ENCODE measurements at regions of chr11 and their contacts with region 1.

Region 1: DNA sequence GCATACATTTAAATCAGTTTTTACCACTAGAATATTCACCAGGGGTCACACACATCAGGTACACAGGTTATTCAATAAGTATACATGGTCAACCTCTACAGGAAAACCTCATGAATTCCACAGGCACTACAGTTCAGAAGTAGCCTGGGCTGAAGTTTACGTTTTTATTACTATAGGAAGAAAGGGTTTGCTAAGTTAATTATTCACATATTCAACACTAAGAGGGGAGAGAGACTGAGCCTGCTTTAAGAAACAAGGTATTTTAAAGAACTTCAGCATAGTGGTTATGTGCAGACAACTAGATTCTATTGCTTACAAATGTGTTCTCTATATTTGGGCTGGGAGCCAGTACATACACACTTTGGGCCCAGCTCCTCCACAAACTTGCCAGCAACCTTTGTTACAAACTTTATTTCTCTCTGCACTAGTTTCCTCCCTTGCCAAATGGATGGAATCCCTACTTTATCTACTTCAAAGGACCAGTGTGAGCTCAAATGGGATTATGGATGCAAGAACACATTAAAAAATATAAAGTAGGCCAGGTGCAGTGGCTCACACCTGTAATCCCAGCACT is 31.9 kb downstream of the IL18BP start:
- DNase-seq: no peak
- H3K4me3 Mint-ChIP-seq: no peak overlapping the region
- H3K27ac Mint-ChIP-seq: peak overlapping the region; percentile 13
- H3K4me1 Mint-ChIP-seq: peaks cover 42% of the 10 kb centered on the region
- H3K27me3 Mint-ChIP-seq: no peaks in the 10 kb centered on the region

Region 2: DNA sequence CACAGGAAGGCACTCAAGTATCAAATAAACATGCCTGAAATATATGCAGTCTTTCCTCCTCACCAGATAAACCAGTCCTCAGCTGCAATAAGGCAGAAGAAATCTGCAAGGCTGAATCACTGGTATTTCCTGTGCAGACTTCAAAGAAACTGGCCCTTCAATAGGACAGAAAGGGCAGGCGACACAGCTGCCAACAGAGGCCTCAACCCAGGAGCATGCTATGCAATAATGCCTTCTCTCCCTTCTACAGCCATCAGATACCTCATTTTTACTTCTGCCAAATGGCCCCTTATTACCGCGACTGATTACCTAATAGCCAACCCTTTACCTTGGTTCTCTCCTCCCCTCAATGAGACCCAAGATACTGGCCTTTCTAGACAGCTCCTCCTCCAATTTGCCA is 41.8 kb after region 1 on chr11:
- CTCF ChIA-PET with region 1: interaction called, 18 read pairs
- intact Hi-C with region 1: no loop called
- DNase-seq: peak; percentile 22
- H3K4me3 Mint-ChIP-seq: no peak overlapping the region
- H3K27ac Mint-ChIP-seq: no peak overlapping the region
- H3K4me1 Mint-ChIP-seq: peaks cover 42% of the 10 kb centered on the region
- H3K27me3 Mint-ChIP-seq: no peaks in the 10 kb centered on the region

Region 3: GRCh38 chr11:72085621-72086351 is 55.2 kb after region 1 on chr11:
- CTCF ChIA-PET with region 1: interaction called, 162 read pairs
- intact Hi-C with region 1: loop called (anchors 2 kb)
- DNase-seq: no peak
- H3K4me3 Mint-ChIP-seq: no peak overlapping the region
- H3K27ac Mint-ChIP-seq: no peak overlapping the region
- H3K4me1 Mint-ChIP-seq: peaks cover 22% of the 10 kb centered on the region
- H3K27me3 Mint-ChIP-seq: no peaks in the 10 kb centered on the region

Region 4: DNA sequence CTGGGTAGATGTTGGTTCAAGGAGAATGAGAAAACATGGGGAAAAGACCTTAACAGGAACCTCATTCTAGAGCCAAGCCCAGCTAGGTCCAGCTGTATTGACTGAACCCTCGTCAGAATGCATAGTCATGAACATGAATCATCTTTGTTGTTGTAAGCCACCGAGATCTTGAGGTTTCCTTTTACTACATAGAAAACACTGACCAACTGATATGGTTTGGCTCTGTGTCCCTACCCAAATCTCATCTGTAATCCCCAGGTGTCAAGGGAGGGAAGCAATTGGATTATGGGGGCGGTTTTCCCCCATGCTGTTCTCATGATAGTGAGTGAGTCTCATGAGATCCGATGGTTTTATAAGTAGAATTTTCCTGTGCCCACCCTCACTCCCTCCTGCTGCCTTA is 232.8 kb after region 1 on chr11:
- CTCF ChIA-PET with region 1: no interaction called
- intact Hi-C with region 1: no loop called
- DNase-seq: no peak
- H3K4me3 Mint-ChIP-seq: no peak overlapping the region
- H3K27ac Mint-ChIP-seq: no peak overlapping the region
- H3K4me1 Mint-ChIP-seq: no peaks in the 10 kb centered on the region
- H3K27me3 Mint-ChIP-seq: peaks cover 9% of the 10 kb centered on the region